ENCODE measurements at regions of chr3 and their contacts with region 1.

Region 1: DNA sequence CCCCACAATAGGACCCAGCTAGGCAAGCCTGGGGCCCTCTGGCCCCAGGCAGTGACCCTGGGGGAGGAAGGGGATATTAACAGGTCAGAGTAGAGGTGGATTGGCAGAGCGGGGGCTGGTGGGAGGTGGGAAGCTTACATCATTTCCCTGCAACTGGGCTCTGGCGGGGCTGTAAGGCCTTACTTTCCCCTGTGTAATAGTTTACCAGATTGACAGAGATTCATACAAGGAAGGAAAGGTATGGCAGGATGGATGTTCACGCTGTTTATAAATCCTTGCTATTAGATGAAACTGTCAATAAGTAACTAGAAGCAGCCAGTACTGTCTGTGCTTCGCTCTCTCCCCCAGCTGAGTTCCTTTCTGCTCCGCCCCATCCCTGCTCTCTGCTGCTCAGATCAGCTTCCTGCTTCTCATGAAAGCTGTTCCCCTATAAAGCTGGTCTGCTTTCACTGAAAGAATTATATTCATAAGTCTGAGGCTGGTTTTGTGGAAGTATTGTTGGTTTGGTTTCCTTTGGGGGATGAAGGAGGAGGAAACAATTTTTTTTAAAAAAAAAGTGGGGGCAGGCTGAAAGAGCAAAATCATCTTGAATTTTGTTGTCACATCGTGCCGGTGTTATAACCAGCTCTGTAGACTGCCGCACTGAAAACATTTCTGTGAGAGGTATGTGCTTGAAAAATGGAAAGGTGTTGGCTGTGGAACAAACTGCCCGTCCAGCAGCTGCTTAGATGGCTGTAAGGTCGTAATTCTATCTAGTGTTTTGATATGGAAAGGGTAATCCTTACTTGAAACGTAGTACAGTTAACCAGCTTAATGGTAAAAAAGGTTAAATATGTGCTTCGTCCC is 76.4 kb downstream of the BBX start:
- DNase-seq: no peak

Region 2: GRCh38 chr3:107523539-107524325 is 75.4 kb before region 1 on chr3:
- intact Hi-C with region 1: loop called (anchors 2 kb)
- DNase-seq: peak; percentile 82

Region 3: GRCh38 chr3:107651782-107652181 is 52.6 kb after region 1 on chr3:
- intact Hi-C with region 1: no loop called
- DNase-seq: no peak